Activated naive CD4-positive, alpha-beta T cell treated with anti-CD3 and anti-CD28 coated beads, Interleukin-2, amount 10 ng/mL, durations not matched to agents 7 days and 5 days (primary cell): ENCODE measurements at regions of chr1 and their contacts with region 1.

Region 1: GRCh38 chr1:116690849-116691406 is 23.4 kb upstream of the IGSF3 start:
- DNase-seq: no peak
- H3K4me3 Mint-ChIP-seq: no peak overlapping the region
- H3K27ac Mint-ChIP-seq: no peak overlapping the region
- H3K4me1 Mint-ChIP-seq: no peaks in the 10 kb centered on the region
- H3K27me3 Mint-ChIP-seq: peaks cover 11% of the 10 kb centered on the region

Region 2: GRCh38 chr1:116674011-116674531 is 16.9 kb before region 1 on chr1:
- CTCF ChIA-PET with region 1: interaction called, 10 read pairs
- DNase-seq: no peak
- H3K4me3 Mint-ChIP-seq: no peak overlapping the region
- H3K27ac Mint-ChIP-seq: no peak overlapping the region
- H3K4me1 Mint-ChIP-seq: no peaks in the 10 kb centered on the region
- H3K27me3 Mint-ChIP-seq: peaks cover 72% of the 10 kb centered on the region

Region 3: DNA sequence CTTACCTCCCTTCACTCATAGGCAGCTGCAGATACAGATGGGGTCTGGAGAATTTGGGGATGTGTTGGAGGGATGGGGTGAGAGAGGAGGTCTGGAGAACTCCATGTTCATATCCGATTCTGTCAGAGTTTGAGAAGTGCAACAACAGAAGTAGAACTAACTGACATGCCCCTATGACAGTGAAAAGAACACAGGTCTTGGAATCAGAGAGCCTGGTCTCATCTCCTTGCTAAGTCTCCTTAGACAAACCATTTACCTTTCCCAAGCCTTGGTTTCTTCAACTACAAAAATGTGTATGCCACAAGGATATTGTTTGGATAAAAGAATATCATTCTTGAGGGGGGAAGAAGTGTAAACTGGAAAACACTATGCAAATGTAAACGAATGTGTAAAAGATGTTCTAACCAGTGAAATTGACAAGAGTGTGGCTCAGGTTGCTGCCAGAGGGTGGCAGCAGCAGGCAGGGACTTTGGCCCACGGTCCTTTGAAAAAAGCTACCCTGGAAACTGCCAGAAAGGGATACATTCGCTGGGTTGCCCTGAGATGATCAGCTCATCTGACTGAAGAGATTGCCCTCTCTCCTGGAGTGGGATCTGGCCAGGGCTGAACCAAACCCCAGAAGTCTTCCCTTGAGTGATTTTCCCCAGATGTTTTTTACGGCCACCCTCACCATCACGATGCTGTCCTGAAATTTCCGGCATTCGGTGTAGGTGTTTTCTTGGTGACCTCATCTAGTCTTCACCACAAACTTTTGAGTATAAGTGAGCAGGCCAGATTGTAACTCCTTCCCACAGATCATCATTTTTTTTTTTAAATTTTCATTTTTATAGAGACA is 46.3 kb after region 1 on chr1:
- CTCF ChIA-PET with region 1: no interaction called
- DNase-seq: peak; percentile 83
- H3K4me3 Mint-ChIP-seq: peak overlapping the region; percentile 25
- H3K27ac Mint-ChIP-seq: peak overlapping the region; percentile 96
- H3K4me1 Mint-ChIP-seq: peaks cover 48% of the 10 kb centered on the region
- H3K27me3 Mint-ChIP-seq: no peaks in the 10 kb centered on the region